Activated CD4-positive, alpha-beta T cell treated with anti-CD3 and anti-CD28 coated beads for 36 hours (primary cell): ENCODE measurements at regions of chr6 and their contacts with region 1.

Region 1: DNA sequence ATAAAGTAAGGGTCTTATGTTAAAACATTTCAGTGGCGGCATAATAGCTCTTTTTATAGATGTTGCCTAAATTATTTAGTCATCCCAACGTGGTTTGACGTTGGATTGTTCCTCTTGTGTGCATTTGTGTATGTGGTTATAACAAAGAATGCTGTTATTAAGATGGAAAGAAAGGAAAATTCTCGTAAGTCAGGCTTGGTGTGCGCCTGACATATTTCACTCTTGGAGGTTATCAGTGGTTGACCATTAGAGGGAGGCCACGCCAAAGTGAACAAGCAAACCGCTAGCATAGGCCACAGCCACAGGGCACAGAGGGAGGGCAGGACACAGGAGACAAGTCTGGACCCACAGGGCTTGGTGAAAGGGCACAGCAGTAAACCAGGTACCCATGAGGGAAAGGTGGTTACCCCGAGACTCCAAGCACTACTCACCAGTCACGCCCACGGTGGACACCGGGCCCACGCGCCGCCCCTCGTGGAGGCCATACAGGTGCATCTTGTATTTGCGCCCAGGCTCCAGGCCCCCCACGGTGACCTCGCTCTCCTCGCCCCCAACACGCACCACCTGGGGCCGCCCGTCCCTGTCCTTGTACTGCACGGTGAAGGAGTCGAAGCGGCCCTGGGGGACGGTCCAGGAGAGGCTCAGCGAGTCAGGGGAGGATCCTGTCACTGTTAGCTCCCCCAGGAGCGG is 22.9 kb downstream of the CYP21A2 start:
- DNase-seq: no peak
- ATAC-seq: no peak
- H3K4me3 Mint-ChIP-seq: no peak overlapping the region
- H3K27ac Mint-ChIP-seq: no peak overlapping the region
- H3K4me1 Mint-ChIP-seq: no peaks in the 10 kb centered on the region
- H3K27me3 Mint-ChIP-seq: no peaks in the 10 kb centered on the region

Region 2: GRCh38 chr6:31945507-31946369 is 115.4 kb before region 1 on chr6 and contains the start of gene CFB:
- CTCF ChIA-PET with region 1: no interaction called
- POLR2A ChIA-PET with region 1: no interaction called
- intact Hi-C with region 1: loop called in 1 of 2 experiments (anchors 10 kb)
- DNase-seq: peak; percentile 36
- ATAC-seq: peak; percentile 53
- H3K4me3 Mint-ChIP-seq: no peak within 1 kb of the TSS
- H3K27ac Mint-ChIP-seq: no peak within 1 kb of the TSS
- H3K4me1 Mint-ChIP-seq: peaks cover 8% of the 10 kb centered on the region
- H3K27me3 Mint-ChIP-seq: peaks cover 7% of the 10 kb centered on the region
- total RNA-seq, gene CFB: 0.69 to 0.96 TPM

Region 3: GRCh38 chr6:31958741-31959739 is 102.1 kb before region 1 on chr6 and contains the starts of genes NELFE and SKIC2:
- CTCF ChIA-PET with region 1: no interaction called
- POLR2A ChIA-PET with region 1: no interaction called
- intact Hi-C with region 1: no loop called
- DNase-seq: peak; percentile 99
- ATAC-seq: peak; percentile 99
- H3K4me3 Mint-ChIP-seq: peak within 1 kb of the TSS; percentile 95
- H3K27ac Mint-ChIP-seq: peak within 1 kb of the TSS; percentile 98
- H3K4me1 Mint-ChIP-seq: peaks cover 34% of the 10 kb centered on the region
- H3K27me3 Mint-ChIP-seq: no peaks in the 10 kb centered on the region
- total RNA-seq, gene NELFE: 74.3 to 95.1 TPM
- total RNA-seq, gene SKIC2: 90.2 to 104 TPM